WTC11 (cell line): ENCODE measurements at regions of chr5 and their contacts with region 1.

Region 1: GRCh38 chr5:54905943-54906537 is 79.4 kb downstream of the ESM1 start:
- DNase-seq: peak; percentile 79
- ATAC-seq: peak; percentile 53
- H3K4me3 Mint-ChIP-seq: no peak overlapping the region
- H3K27ac Mint-ChIP-seq: no peak overlapping the region
- H3K4me1 Mint-ChIP-seq: no peaks in the 10 kb centered on the region; the same call in none of the 2 replicates
- H3K27me3 Mint-ChIP-seq: no peaks in the 10 kb centered on the region
- CTCF ChIP-seq: peak; percentile 42; the same call in 1 of the 2 replicates

Region 2: GRCh38 chr5:54517174-54518092 is 388.6 kb before region 1 on chr5 and contains the start of gene SNX18:
- CTCF ChIA-PET with region 1: interaction called, 28 read pairs
- POLR2A ChIA-PET with region 1: no interaction called
- DNase-seq: peak; percentile 88
- ATAC-seq: peak; percentile 62
- H3K4me3 Mint-ChIP-seq: peak within 1 kb of the TSS; percentile 70
- H3K27ac Mint-ChIP-seq: no peak within 1 kb of the TSS
- H3K4me1 Mint-ChIP-seq: peaks cover 34% of the 10 kb centered on the region
- H3K27me3 Mint-ChIP-seq: peaks cover 14% of the 10 kb centered on the region
- CTCF ChIP-seq: peak; percentile 85
- total RNA-seq, gene SNX18: 20.3 to 24.6 TPM (median 23.6 TPM) in 3 replicates

Region 3: GRCh38 chr5:55037046-55037771 is 131.2 kb after region 1 on chr5:
- CTCF ChIA-PET with region 1: interaction called, 42 read pairs
- POLR2A ChIA-PET with region 1: no interaction called
- DNase-seq: peak; percentile 31
- ATAC-seq: peak; percentile 100
- H3K4me3 Mint-ChIP-seq: no peak overlapping the region
- H3K27ac Mint-ChIP-seq: no peak overlapping the region
- H3K4me1 Mint-ChIP-seq: peaks cover 20% of the 10 kb centered on the region
- H3K27me3 Mint-ChIP-seq: no peaks in the 10 kb centered on the region
- CTCF ChIP-seq: no peak

Region 4: DNA sequence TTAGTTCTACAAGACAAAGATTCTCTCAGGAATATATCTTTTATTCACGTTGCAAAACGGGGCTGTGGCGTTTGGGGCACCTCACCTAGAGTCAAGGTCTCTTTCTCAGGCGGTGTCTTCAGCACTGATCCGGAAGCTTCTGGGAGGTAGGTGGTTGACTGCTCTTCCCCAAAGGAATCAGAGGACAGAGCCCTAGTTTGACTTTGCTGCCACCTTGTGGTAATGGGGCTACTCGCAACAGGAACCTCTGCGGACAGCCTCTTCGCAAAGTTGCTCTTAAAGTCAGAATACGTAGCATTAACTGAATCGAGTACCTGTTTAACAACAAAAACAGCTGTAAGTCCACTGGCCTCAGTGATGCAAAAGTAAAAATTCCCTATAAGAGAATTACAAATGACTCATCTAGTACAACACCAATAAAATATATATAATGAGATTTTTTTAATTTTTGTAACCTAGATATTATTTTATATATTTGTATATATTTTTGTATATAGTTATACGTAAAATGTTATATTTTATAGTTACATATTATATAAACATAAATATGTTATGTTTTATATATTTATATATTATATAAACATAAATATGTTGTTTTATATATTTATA is 240.6 kb after region 1 on chr5:
- CTCF ChIA-PET with region 1: interaction called, 46 read pairs
- POLR2A ChIA-PET with region 1: no interaction called
- DNase-seq: peak; percentile 92
- ATAC-seq: peak; percentile 97
- H3K4me3 Mint-ChIP-seq: peak overlapping the region; percentile 40; the same call in 1 of the 2 replicates
- H3K27ac Mint-ChIP-seq: no peak overlapping the region; the same call in 1 of the 2 replicates
- H3K4me1 Mint-ChIP-seq: peaks cover 7% of the 10 kb centered on the region
- H3K27me3 Mint-ChIP-seq: no peaks in the 10 kb centered on the region; the same call in none of the 2 replicates
- CTCF ChIP-seq: peak; percentile 80